Calu3 (cell line): ENCODE measurements at regions of chr5 and their contacts with region 1.

Region 1: DNA sequence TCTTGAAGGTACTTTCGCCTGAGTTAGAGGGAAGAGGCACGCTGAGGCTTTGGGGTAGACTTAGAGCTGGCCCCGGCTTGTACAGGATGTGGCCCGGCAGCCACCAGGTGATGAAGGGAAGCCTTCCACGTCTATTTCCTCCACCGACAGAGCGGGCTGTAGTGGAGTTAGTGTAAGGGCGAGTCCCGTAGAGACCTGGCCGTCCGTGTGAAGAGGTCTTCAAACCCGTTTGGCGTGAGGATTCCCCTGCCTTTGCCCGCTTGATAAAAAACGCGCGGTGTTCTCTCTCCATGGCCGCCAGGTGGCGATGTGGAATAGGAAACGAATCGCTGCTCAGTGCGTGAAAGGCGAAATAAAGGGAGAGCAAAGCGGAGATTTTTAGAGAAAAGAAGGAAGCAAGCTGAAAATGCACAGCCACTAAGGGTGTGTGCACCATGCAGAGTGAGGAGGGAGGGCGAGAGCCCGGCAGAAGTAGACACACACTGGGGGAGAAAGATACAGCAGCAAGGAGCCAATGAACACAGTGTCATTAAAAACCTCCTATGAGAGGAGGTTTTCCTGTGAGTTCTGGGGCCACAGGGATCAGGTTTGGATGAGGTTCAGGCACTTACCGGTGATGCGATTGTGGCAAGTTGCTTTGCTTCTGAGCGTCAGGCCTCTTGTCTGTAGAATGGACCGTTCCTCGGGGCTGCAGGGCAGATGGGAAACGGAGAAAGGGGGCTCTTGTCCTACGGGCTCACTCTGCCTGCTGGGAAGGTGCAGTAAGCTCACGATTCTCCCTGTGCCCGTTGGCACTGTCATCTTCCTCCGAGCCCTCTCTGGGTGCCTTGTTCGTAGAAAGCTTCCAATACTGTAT is 34.2 kb downstream of the STC2 start:
- DNase-seq: peak; percentile 87
- H3K4me3 Mint-ChIP-seq: peak overlapping the region; percentile 20
- H3K27ac Mint-ChIP-seq: peak overlapping the region; percentile 40
- H3K4me1 Mint-ChIP-seq: peaks cover 11% of the 10 kb centered on the region
- H3K27me3 Mint-ChIP-seq: peaks cover 52% of the 10 kb centered on the region
- CTCF ChIP-seq: peak; percentile 93

Region 2: DNA sequence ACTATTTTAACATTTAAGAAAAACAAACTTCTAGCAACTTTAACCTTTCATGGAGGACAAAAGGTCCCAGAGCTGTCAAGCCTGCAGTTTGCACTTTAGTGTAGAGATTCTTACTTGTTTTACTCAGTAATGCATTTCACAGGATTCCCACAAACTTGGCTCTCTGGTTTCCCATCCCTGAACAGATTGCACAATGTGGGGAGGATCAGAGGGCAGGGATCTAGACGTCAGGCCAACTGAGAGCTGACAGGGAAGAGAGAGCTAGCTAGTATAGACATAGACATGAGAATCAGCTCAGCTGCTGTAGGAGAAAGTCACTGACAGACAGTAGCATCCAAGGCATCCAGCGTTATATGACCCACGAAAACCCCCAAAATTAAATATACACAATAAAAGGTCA is 170.6 kb before region 1 on chr5:
- CTCF ChIA-PET with region 1: no interaction called
- intact Hi-C with region 1: no loop called
- DNase-seq: no peak
- H3K4me3 Mint-ChIP-seq: no peak overlapping the region
- H3K27ac Mint-ChIP-seq: no peak overlapping the region
- H3K4me1 Mint-ChIP-seq: no peaks in the 10 kb centered on the region
- H3K27me3 Mint-ChIP-seq: no peaks in the 10 kb centered on the region
- CTCF ChIP-seq: no peak

Region 3: DNA sequence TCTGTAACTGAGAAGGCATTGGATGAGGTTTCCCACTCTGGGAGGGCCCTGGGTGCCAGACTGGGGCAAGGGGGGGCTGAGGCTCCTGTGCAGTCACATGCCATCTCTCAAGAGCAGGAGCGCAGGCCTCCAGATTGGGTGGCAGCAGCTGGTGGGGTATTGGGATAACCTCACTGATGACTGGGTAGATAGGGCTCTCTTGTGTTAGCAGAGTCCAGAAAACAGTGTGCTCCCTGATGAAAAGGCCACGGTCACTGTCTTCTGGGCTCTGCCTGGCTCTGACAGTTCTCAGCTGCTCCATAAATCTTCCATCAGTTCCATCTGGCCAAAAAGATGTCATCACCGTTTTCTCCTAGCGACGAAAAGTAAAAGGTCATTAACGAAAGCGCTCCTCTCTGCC is 37.2 kb before region 1 on chr5:
- CTCF ChIA-PET with region 1: no interaction called
- intact Hi-C with region 1: no loop called
- DNase-seq: no peak
- H3K4me3 Mint-ChIP-seq: no peak overlapping the region
- H3K27ac Mint-ChIP-seq: no peak overlapping the region
- H3K4me1 Mint-ChIP-seq: no peaks in the 10 kb centered on the region
- H3K27me3 Mint-ChIP-seq: peaks cover 94% of the 10 kb centered on the region
- CTCF ChIP-seq: no peak

Region 4: GRCh38 chr5:173573126-173573960 is 279.3 kb after region 1 on chr5:
- CTCF ChIA-PET with region 1: interaction called, 26 read pairs
- intact Hi-C with region 1: loop called (anchors 1 kb)
- DNase-seq: peak; percentile 88
- H3K4me3 Mint-ChIP-seq: peak overlapping the region; percentile 37
- H3K27ac Mint-ChIP-seq: no peak overlapping the region
- H3K4me1 Mint-ChIP-seq: peaks cover 11% of the 10 kb centered on the region
- H3K27me3 Mint-ChIP-seq: peaks cover 32% of the 10 kb centered on the region
- CTCF ChIP-seq: peak; percentile 96

Region 5: DNA sequence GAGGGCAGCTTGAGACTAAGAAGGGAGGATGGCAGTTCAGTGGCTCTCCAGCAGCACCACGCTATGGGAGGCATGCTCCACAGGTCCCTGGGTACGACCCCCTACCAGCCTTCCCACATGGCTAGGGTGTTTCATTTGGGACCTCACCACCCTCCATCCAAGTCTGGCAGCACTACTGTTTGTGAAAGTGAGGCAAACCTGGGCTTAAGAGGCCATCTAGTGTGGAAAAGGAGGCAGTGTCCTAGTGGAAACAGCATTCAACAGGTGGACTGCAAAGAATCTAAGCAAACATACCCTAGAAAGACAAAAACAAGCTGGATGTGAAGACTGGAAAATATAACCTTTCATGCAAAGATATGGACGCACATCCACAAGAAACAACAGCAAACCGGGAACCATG is 690.2 kb after region 1 on chr5:
- CTCF ChIA-PET with region 1: no interaction called
- intact Hi-C with region 1: loop called (anchors 1 kb)
- DNase-seq: peak; percentile 34
- H3K4me3 Mint-ChIP-seq: no peak overlapping the region
- H3K27ac Mint-ChIP-seq: no peak overlapping the region
- H3K4me1 Mint-ChIP-seq: no peaks in the 10 kb centered on the region
- H3K27me3 Mint-ChIP-seq: peaks cover 56% of the 10 kb centered on the region
- CTCF ChIP-seq: peak; percentile 51

Region 6: DNA sequence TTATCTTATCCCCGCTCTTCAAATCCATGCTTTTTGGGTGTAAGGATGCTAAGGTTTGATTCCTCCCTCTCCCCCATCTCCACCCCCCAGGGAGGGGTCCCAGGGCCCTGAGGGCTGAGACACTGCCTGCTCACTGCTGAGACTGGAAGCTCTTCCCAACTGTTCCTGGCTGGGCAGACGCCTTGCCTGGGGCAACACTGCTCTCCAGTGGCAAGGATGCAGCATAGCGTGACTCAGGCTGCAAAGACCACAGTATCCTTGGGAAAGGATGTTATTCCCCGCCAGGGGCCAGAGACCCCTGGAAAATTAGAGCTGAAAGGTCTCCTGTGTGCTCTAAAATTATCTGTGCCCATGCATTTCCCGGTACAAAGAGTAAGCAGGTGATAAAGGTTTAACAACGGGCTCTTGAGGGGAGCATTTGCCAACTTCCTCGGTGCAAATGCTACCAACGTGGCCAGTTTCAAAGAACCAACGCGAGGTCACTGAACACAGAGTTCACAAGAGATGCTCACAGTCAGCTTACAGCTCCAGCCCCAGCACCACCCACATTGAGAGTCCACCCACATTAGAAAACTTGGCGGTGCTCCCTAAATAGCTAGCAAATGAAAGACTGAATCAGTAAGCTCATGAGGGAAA is 1023.3 kb after region 1 on chr5:
- CTCF ChIA-PET with region 1: no interaction called
- intact Hi-C with region 1: loop called (anchors 5 kb)
- DNase-seq: peak; percentile 60
- H3K4me3 Mint-ChIP-seq: no peak overlapping the region
- H3K27ac Mint-ChIP-seq: no peak overlapping the region
- H3K4me1 Mint-ChIP-seq: no peaks in the 10 kb centered on the region
- H3K27me3 Mint-ChIP-seq: peaks cover 100% of the 10 kb centered on the region
- CTCF ChIP-seq: peak; percentile 76